Activated B cell treated with CpG ODN at 0.5 μM for 24 hours (primary cell): ENCODE measurements at regions of chr4 and their contacts with region 1.

Region 1: DNA sequence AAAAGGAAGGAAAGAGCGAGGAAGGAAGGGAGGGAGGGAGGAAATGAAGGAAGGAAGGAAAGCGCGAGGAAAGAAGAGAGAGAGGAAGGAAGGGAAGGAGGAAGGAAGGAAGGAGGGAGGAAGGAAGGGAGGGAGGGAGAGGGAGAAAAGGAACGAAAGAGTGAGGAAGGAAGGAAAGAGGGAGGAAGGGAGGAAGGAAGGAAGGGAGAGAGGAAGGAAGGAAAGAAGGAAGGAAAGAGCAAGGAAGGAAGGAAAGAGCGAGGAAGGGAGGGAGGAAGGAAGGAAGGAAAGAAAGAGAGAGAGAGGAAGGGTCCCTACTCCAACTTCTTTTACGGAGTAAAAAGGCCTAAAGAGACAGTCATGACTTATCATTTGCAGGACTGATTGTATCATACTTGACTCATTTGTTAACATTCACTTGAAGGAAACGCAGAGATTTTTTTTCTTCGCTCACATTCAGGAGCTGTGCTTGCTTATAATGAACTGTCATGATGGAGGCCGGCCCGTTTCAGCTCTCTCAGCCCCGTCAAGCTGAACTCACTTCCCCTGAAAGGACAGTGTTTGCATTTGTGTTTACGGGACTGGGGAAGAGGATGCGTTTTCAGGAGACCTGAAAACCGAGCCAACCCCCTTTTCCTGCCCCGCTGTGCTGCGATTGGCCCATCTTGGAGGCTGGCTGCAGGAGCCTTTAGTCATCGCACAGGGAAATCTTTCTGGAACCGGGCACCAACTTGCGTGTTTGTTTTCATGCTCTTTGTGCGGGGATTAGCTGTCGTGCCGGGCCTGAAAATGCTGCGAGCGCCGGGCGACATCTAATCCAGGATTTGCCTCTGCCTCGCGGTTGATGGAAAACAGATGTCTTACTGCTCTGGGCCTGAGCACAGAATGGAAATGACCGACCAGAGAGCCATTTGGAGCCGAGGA is 17.8 kb downstream of the TRIM2 start:
- DNase-seq: peak; percentile 30
- ATAC-seq: peak; percentile 49
- H3K4me3 Mint-ChIP-seq: peak overlapping the region; percentile 89
- H3K27ac Mint-ChIP-seq: peak overlapping the region; percentile 73
- H3K4me1 Mint-ChIP-seq: peaks cover 37% of the 10 kb centered on the region
- H3K27me3 Mint-ChIP-seq: peaks cover 4% of the 10 kb centered on the region
- CTCF ChIP-seq: no peak

Region 2: DNA sequence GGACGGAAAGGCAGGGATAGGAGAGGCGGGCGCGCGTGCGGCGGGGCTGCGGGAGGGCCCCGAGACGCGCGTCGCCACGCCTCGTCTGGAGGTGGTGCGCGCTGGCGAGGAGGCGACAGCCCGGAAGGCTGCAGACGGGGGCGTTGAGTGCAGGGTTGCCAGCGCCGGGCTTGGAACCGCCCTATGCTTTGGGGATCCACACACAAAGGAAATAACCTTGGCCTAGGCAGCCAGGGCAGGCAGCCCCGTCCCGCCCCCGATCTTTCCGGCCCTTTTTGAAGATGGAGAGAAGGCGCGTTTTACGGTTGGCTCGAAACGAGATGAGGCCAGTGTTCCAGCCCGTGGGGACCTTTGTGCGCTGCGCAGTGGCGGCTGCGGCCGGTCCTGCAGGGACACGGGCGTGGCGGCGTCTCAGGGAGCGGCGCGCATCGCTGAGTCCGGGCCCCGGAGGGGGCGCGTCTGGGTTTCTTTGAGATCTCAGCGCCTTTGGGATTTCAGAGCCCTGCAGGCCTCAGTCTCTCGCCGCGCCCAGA is 68.6 kb before region 1 on chr4:
- CTCF ChIA-PET with region 1: no interaction called
- POLR2A ChIA-PET with region 1: interaction called, 5 read pairs
- intact Hi-C with region 1: loop called (anchors 2 kb)
- DNase-seq: peak; percentile 63
- ATAC-seq: peak; percentile 76
- H3K4me3 Mint-ChIP-seq: peak overlapping the region; percentile 87
- H3K27ac Mint-ChIP-seq: peak overlapping the region; percentile 85
- H3K4me1 Mint-ChIP-seq: peaks cover 35% of the 10 kb centered on the region
- H3K27me3 Mint-ChIP-seq: peaks cover 30% of the 10 kb centered on the region
- CTCF ChIP-seq: no peak

Region 3: DNA sequence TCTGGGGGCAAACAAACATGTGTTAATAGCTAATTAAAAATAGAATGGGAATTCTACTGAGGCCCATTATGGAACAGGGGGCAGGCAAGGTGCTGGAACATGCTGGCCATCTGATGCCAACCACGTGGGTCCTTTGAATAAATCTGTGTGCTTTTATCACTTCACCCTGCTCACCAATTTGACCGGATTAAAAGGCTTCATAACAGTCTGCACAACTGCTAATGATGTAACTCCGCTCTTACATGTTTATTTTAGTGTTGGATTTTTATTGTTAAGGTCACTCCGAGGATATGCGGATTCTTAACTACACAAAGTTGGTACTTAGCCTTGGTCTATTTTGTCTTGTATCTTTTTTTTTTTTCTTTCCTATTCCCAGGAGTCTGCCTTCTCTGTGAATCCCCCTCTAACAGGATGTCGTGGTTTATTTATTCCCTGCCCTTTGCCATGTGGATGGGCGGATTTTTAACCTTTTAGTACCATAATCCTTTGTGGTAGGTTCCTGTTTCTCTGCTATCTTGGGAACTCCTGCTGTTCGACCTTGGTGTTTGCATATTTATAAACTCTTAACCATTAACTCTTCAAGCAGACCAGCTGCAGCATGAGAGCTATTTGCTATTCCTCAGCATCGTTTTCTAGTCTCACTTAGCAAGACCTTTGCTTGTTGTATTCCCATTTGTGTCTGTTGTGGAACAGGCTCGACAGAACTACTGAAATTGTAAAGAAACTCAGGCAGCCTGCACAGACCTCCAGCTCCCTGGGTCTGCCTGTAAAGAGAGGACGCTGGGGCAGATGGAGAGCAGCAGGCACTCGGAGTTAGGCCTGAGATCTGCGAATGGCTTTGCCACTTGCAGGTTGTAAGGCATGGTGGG is 20.2 kb after region 1 on chr4:
- CTCF ChIA-PET with region 1: no interaction called
- POLR2A ChIA-PET with region 1: interaction called, 23 read pairs
- intact Hi-C with region 1: no loop called
- DNase-seq: no peak
- ATAC-seq: no peak
- H3K4me3 Mint-ChIP-seq: no peak overlapping the region
- H3K27ac Mint-ChIP-seq: no peak overlapping the region
- H3K4me1 Mint-ChIP-seq: peaks cover 6% of the 10 kb centered on the region
- H3K27me3 Mint-ChIP-seq: no peaks in the 10 kb centered on the region
- CTCF ChIP-seq: no peak

Region 4: GRCh38 chr4:153318696-153319320 is 96.8 kb after region 1 on chr4:
- CTCF ChIA-PET with region 1: no interaction called
- POLR2A ChIA-PET with region 1: no interaction called
- intact Hi-C with region 1: loop called (anchors 10 kb)
- DNase-seq: no peak
- ATAC-seq: peak; percentile 65
- H3K4me3 Mint-ChIP-seq: no peak overlapping the region
- H3K27ac Mint-ChIP-seq: no peak overlapping the region
- H3K4me1 Mint-ChIP-seq: no peaks in the 10 kb centered on the region
- H3K27me3 Mint-ChIP-seq: no peaks in the 10 kb centered on the region
- CTCF ChIP-seq: peak; percentile 27

Region 5: GRCh38 chr4:153344131-153345010 is 122.3 kb after region 1 on chr4 and contains the start of gene MND1:
- CTCF ChIA-PET with region 1: no interaction called
- POLR2A ChIA-PET with region 1: no interaction called
- intact Hi-C with region 1: no loop called
- DNase-seq: peak; percentile 91
- ATAC-seq: peak; percentile 93
- H3K4me3 Mint-ChIP-seq: peak within 1 kb of the TSS; percentile 94
- H3K27ac Mint-ChIP-seq: no peak within 1 kb of the TSS
- H3K4me1 Mint-ChIP-seq: peaks cover 44% of the 10 kb centered on the region
- H3K27me3 Mint-ChIP-seq: no peaks in the 10 kb centered on the region
- CTCF ChIP-seq: peak; percentile 72
- total RNA-seq, gene MND1: 0.27 and 0.53 TPM in 2 replicates

Region 6: DNA sequence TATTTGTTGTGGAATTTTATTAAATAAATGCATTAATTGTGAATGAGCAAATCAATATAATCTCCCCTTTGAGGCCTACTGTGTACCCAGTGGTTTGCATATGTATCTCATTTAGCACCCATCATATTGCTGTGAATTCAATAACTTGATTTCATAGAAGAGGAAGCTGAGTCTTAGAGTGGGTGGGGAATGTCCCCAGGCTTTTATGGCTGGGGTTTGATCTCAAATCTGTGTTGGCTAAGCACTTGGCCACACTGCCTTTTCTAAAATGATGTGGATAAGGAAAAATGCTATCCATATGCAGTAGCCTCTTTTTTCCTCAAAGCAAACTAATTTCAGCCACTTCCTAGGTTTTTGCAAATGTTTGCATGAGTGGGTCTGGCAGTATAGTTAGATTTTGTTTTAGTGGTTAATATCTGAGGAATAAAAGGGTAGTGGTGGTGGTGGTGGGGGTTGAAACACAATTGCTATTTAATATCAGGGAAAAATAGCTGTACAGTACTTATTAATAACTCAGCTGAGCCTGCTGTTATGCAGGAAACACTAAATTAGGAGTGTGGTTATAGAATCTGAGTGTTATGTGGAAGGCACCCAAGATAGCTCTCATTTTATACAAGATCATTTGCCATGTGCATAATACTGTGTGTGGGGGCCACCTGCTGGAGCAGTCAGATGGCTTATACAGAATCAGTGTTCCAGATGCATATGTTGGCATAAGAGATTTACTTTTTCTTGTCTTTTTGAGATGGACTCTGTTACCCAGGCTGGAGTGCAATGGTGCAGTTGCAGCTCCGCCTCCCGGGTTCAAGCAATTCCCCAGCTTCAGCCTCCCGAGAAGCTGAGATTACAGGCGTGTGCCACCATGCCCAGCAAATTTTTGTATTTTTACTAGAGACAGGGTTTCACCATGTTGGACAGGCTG is 352.1 kb after region 1 on chr4:
- CTCF ChIA-PET with region 1: no interaction called
- POLR2A ChIA-PET with region 1: no interaction called
- intact Hi-C with region 1: loop called (anchors 10 kb)
- DNase-seq: no peak
- ATAC-seq: peak; percentile 78
- H3K4me3 Mint-ChIP-seq: peak overlapping the region; percentile 32
- H3K27ac Mint-ChIP-seq: peak overlapping the region; percentile 82
- H3K4me1 Mint-ChIP-seq: peaks cover 77% of the 10 kb centered on the region
- H3K27me3 Mint-ChIP-seq: no peaks in the 10 kb centered on the region
- CTCF ChIP-seq: no peak